ENCODE measurements at regions of chr5 and their contacts with region 1.

Region 1: DNA sequence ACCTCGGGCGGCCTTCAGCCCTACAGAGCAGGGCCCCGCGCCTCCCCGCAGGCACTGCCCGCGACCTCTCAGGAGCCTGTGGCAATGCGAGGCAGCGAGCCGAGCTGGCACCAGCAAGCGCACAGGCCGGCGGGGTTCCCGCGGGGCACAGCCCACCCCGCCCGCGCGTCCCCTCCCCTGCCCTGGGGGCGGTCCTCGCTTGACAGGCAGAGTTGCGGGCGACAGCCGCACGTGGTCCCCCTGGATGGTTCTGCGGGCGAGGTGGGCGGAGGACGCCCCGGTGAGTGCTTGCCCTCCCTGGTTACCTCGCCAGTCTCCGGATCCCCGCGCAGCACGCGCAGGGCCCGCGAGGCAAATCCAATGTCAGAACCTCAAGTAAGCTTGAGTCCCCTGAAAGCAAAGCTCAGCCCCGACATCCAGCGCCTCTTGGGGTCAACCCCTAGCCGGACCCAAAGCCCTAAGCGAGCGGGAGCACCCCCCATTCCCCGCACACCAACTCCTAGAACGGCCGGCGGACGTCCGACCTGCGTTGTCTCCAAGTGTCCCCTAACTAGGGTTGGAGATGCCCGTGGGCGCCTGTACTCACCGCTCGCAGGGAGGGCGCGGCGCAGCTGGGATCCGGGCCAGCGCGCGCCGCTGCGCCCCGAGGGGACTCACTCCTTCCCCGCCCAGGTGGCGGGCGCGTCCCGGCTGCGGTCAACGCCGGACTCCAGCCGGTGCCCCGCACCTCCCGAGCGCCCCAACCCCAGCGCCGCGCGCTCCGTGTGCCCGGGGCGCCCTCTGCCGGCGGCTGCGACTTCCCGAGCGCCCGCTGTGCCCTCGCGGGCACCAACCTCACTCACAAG is at the start of gene DRD1:
- DNase-seq: peak in 8 of 10 donors; percentile 45 to 94 (median 70)

Region 2: GRCh38 chr5:175254155-175254554 is 190.1 kb before region 1 on chr5:
- intact Hi-C with region 1: loop called (anchors 10 kb)
- DNase-seq: peak in 1 of 10 donors; percentile 30